Left cardiac atrium (tissue), 4 donors: ENCODE measurements at regions of chr18 and their contacts with region 1.

Region 1: DNA sequence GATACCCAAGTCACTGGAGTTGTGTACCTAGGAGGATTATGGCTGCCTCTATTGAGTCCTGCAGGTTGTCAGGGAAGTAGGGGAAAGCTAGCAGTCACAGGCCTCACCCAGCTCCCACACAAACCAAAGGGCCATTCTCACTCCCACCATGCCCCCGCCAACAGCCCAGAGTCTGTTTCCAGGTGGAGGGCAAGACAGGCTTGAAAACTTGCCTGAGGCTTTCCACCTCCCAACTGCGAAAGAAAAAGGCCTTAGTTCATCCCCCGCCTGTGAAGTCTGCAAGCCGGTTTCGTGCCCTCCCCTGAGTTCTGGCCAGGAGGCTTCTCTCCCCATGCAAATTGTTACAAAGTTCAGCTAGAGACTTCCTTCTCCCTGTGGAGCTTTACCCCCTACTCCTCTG is 270.3 kb downstream of the TXNL1 start:
- DNase-seq: no peak
- ATAC-seq: no peak

Region 2: DNA sequence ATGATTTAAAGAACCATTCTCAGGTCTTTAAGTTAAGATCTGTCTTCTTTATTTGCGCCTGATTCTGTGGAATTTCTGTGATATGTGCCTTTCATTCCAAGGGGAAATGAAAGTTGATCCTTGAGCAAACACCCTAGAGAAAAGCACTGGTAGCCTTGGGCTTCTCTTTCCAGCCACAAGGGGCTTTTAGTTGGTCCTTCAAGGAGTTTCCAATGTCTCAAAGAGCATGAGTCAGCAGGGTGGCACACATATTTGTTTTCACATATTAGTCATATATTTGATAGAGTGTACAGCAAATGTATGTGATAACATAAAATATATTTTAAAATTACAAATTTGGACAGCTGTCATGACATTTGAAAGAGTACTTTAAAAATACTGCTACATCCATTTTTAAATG is 69.1 kb before region 1 on chr18:
- intact Hi-C with region 1: loop called in 1 of 2 experiments (anchors 10 kb)
- DNase-seq: no peak
- ATAC-seq: no peak

Region 3: DNA sequence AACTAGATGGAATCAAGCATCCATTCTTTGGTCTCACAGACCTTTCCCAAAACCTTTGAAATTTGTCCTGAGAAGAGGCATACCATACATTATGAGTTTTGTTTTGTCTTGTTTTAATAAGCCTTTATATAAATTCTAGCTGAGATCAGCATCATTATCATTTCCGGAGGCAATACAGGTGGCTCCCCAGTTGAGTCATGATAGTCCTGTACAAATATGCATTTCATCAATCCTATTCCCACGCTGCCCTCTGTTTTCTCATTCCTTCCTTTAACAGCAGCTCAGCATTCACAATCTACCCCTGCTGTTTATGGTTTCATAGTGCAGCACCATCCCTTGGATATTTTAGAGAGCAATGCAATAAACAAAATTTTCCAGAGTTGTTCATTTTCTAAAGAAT is 53.6 kb after region 1 on chr18:
- intact Hi-C with region 1: no loop called
- DNase-seq: no peak
- ATAC-seq: no peak

Region 4: DNA sequence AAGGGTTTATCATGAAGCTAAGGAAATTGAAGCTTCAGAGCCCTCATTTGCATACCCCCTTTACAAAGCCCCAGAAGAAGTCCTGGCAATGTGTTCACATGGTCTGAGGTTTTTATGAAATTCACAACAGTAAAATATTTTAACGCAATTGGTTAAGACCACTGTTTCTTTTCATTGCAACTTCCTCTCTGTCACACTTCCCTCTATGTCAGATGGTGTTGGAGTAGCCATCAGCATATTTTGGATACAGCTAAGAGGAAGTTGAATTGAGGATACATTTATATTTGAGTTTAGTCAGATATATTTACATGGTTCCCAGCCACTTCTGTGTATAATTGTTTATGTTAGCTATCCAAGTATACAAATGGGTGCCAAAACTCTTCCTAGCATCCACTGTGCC is 100.3 kb after region 1 on chr18:
- intact Hi-C with region 1: loop called in 1 of 2 experiments (anchors 10 kb)
- DNase-seq: no peak
- ATAC-seq: peak; percentile 19 to 70